Activated B cell treated with CpG ODN at 0.5 μM for 24 hours (primary cell): ENCODE measurements at regions of chr9 and their contacts with region 1.

Region 1: GRCh38 chr9:126860077-126860756 is at the start of gene ZBTB34:
- DNase-seq: peak; percentile 92
- ATAC-seq: peak; percentile 85
- H3K4me3 Mint-ChIP-seq: peak within 1 kb of the TSS; percentile 85
- H3K27ac Mint-ChIP-seq: peak within 1 kb of the TSS; percentile 86
- H3K4me1 Mint-ChIP-seq: peaks cover 29% of the 10 kb centered on the region
- H3K27me3 Mint-ChIP-seq: peaks cover 8% of the 10 kb centered on the region
- CTCF ChIP-seq: peak; percentile 97
- total RNA-seq, gene ZBTB34: 7.9 and 8.9 TPM in 2 replicates

Region 2: DNA sequence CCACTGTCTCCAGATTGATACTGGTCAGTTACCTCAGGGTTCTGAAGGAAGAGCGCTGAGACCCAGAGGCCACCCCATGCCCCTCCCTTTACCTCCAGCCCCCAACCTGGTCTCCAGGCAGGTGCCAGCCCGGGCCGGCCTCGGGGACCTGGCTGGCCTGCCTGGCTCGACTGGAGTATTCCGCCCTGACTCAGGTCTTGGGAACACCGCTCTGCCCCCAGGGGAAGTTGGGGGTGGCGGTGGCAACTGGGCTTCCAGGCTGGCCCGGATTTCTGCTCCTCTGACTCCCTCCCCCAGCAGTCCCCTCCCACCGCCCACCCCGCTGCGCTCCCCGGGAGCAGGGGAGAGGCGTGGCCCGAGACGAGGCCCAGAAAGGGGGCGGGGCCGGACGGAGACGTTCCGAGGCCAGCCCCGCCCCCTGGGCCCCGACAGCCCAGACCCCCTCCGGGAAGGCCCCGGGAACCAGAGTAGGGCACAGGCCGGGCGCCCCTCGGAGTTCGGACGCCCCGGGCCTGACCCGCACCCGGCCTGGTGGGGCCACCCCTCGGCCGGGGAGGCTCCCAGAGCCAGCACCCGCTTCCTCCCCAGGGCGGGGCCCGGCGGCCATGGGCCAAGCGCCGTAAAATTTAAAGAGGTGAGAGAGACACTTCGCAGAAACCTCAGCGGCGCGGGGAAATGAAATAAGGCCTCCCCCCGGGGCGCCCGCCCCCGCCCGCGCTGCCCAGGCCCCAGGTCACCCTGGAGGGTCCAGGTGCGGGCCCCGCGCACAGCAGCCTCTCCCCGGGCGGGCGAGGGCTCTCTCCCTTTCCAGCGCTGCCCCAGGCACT is 137.8 kb before region 1 on chr9:
- CTCF ChIA-PET with region 1: no interaction called
- POLR2A ChIA-PET with region 1: interaction called, 3 read pairs
- intact Hi-C with region 1: loop called (anchors 5 kb)
- DNase-seq: peak; percentile 92
- ATAC-seq: peak; percentile 75
- H3K4me3 Mint-ChIP-seq: peak overlapping the region; percentile 90
- H3K27ac Mint-ChIP-seq: peak overlapping the region; percentile 96
- H3K4me1 Mint-ChIP-seq: peaks cover 47% of the 10 kb centered on the region
- H3K27me3 Mint-ChIP-seq: no peaks in the 10 kb centered on the region
- CTCF ChIP-seq: no peak

Region 3: DNA sequence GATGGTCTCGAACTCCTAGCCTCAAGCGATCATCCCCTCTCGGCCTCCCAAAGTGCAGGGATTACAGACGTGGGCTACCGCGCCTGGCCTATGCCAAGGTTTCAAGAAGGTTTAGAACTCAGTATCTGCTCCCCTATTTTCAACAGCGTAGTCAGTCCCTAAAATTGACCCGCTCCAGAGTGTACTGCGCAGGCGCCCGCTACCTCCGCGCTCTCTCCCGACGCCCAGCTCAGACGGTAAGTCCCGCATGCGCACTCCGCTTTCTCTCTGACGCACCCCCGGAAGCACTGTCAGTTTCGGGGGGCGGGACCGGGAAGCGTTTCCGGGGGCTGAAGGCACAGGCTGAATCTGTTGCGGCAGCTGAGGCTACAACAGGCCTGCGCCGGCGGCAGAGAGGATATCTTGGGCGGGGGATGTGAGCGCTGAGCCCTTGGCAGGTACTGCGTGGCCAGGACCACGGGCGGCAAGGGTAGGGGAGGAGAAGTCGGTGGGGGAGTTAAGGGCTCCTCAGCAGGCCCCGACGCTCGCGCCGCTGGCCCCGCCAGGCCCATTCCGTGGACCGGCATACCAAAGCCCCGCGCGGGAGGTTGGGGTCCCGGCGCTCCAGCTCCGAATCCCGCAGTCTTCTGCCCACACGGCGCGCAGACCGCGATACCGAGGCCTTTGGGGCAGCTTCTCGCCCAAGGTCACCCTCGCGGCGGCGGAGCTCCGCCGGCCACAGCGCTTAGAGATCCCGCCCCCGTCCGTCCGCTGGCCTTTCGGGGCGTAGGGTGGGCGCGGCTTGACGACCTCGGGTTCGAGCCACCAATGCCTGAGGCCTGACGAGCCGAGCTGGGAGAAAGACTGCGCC is 55.3 kb before region 1 on chr9 and contains the start of gene ZBTB43:
- CTCF ChIA-PET with region 1: interaction called, 4 read pairs
- POLR2A ChIA-PET with region 1: no interaction called
- intact Hi-C with region 1: loop called (anchors 2 kb)
- DNase-seq: peak; percentile 97
- ATAC-seq: peak; percentile 82
- H3K4me3 Mint-ChIP-seq: peak within 1 kb of the TSS; percentile 92
- H3K27ac Mint-ChIP-seq: peak within 1 kb of the TSS; percentile 96
- H3K4me1 Mint-ChIP-seq: peaks cover 31% of the 10 kb centered on the region
- H3K27me3 Mint-ChIP-seq: no peaks in the 10 kb centered on the region
- CTCF ChIP-seq: no peak
- total RNA-seq, gene ZBTB43: 20.3 and 22.8 TPM in 2 replicates

Region 4: GRCh38 chr9:126914458-126915280 is 54.5 kb after region 1 on chr9 and contains the start of gene RALGPS1:
- CTCF ChIA-PET with region 1: interaction called, 3 read pairs
- POLR2A ChIA-PET with region 1: interaction called, 3 read pairs
- intact Hi-C with region 1: loop called (anchors 1 kb)
- DNase-seq: peak; percentile 94
- ATAC-seq: peak; percentile 96
- H3K4me3 Mint-ChIP-seq: peak within 1 kb of the TSS; percentile 81
- H3K27ac Mint-ChIP-seq: peak within 1 kb of the TSS; percentile 56
- H3K4me1 Mint-ChIP-seq: peaks cover 10% of the 10 kb centered on the region
- H3K27me3 Mint-ChIP-seq: peaks cover 6% of the 10 kb centered on the region
- CTCF ChIP-seq: no peak
- total RNA-seq, gene RALGPS1: 14.7 and 21.7 TPM in 2 replicates

Region 5: DNA sequence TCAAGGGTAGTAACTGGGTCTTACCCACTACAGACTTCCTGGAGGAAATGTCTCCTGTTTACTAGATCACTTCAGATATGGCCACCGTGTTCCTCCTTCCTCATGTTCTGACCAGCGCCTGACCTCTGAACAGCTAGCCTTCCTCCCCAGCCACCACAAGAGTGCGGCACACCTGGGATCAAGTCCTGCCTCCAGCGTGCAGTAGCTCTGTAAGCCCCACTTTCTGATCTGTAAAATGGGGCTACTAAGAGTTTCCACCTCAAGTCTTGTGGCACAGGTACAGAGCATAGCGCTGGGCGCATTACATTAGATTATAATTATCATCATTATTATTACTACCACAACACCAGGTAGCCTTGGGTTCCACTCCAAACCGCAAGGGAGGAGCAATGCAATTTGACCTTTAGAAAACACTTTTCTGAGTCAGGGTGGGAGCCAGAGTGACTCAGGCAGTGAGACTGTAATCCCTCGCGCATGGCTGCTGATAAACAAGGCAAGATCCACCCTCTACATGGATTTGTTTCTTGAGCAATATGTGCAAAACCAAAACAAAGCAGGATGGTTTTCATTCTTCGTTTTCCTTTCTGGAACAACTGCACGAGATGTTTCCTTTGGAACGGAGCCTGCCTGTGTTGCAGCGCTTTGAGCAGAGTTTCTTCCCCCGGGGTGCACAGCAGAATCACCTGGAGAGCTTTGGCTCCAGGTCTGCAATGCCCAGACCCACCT is 327.2 kb after region 1 on chr9:
- CTCF ChIA-PET with region 1: no interaction called
- POLR2A ChIA-PET with region 1: no interaction called
- intact Hi-C with region 1: no loop called
- DNase-seq: no peak
- ATAC-seq: no peak
- H3K4me3 Mint-ChIP-seq: no peak overlapping the region
- H3K27ac Mint-ChIP-seq: no peak overlapping the region
- H3K4me1 Mint-ChIP-seq: no peaks in the 10 kb centered on the region
- H3K27me3 Mint-ChIP-seq: no peaks in the 10 kb centered on the region
- CTCF ChIP-seq: no peak

Region 6: GRCh38 chr9:127199001-127199791 is 339.0 kb after region 1 on chr9:
- CTCF ChIA-PET with region 1: interaction called, 7 read pairs
- POLR2A ChIA-PET with region 1: no interaction called
- intact Hi-C with region 1: loop called (anchors 1 kb)
- DNase-seq: peak; percentile 71
- ATAC-seq: peak; percentile 89
- H3K4me3 Mint-ChIP-seq: no peak overlapping the region
- H3K27ac Mint-ChIP-seq: no peak overlapping the region
- H3K4me1 Mint-ChIP-seq: no peaks in the 10 kb centered on the region
- H3K27me3 Mint-ChIP-seq: no peaks in the 10 kb centered on the region
- CTCF ChIP-seq: peak; percentile 58